ENCODE measurements at regions of chr17 and their contacts with region 1.

Region 1: GRCh38 chr17:57466017-57466471 is 209.7 kb downstream of the MSI2 start:
- DNase-seq: no peak
- ATAC-seq: no peak
- H3K4me3 ChIP-seq: no peak overlapping the region
- H3K27ac ChIP-seq: no peak overlapping the region
- H3K4me1 ChIP-seq: peaks cover 12% of the 10 kb centered on the region
- H3K27me3 ChIP-seq: no peaks in the 10 kb centered on the region; the same call in 1 of the 2 replicates
- CTCF ChIP-seq: no peak
- POLR2A ChIP-seq: no peak
- RAD21 ChIP-seq: no peak

Region 2: GRCh38 chr17:57166717-57167198 is 299.3 kb before region 1 on chr17:
- CTCF ChIA-PET with region 1: no interaction called
- POLR2A ChIA-PET with region 1: no interaction called
- dilution Hi-C with region 1: no loop called
- in situ Hi-C with region 1: no loop called
- intact Hi-C with region 1: no loop called
- DNase-seq: no peak
- ATAC-seq: no peak
- H3K4me3 ChIP-seq: no peak overlapping the region
- H3K27ac ChIP-seq: no peak overlapping the region
- H3K4me1 ChIP-seq: no peaks in the 10 kb centered on the region
- H3K27me3 ChIP-seq: peaks cover 5% of the 10 kb centered on the region; the same call in 1 of the 2 replicates
- CTCF ChIP-seq: no peak
- POLR2A ChIP-seq: no peak
- RAD21 ChIP-seq: no peak

Region 3: GRCh38 chr17:57499648-57500049 is 33.6 kb after region 1 on chr17:
- CTCF ChIA-PET with region 1: no interaction called
- POLR2A ChIA-PET with region 1: no interaction called
- dilution Hi-C with region 1: no loop called
- in situ Hi-C with region 1: no loop called
- intact Hi-C with region 1: loop called (anchors 1 kb)
- DNase-seq: no peak
- ATAC-seq: no peak
- H3K4me3 ChIP-seq: no peak overlapping the region
- H3K27ac ChIP-seq: no peak overlapping the region
- H3K4me1 ChIP-seq: no peaks in the 10 kb centered on the region
- H3K27me3 ChIP-seq: no peaks in the 10 kb centered on the region
- CTCF ChIP-seq: no peak
- POLR2A ChIP-seq: no peak
- RAD21 ChIP-seq: no peak

Region 4: DNA sequence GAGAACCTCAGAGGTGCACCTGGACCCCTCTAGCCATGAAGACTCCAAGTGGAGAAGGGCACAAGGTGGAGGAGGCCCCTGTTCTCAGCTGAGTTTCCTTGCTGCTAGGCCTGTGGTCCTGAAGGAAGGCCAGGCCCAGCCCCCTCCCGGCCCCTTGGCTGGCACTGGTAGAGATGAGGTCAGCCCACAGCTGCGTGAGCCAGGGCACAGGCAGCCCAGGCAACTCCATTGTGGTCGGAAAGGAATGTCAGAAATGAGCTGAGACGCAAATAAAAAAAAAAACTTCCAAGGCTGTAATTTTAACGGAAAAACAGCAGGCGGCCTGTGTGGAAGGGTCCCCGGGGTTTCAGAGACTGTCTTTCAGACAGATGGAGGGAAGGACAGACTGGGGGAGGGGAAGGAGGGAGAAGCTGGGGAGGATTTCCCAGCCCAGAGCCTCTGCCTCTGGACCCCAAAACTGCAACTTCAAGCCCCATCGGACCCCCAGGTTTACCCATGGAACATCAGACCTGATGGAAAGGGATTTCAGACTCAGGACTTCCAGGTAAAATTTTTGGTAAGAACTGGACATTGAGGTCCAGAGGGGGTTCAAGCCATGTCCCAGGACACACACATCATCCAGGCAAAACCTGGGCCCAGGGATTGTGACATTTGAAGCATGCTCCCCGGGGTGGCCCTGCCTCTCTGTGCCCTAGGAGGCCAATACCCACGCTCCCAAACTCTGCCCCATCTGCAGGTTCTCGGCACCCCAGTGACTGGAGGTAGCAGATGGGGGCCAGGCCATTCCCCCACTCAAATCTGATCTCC is 409.5 kb after region 1 on chr17:
- CTCF ChIA-PET with region 1: no interaction called
- POLR2A ChIA-PET with region 1: no interaction called
- dilution Hi-C with region 1: no loop called
- in situ Hi-C with region 1: no loop called
- intact Hi-C with region 1: no loop called
- DNase-seq: peak; percentile 99
- ATAC-seq: peak; percentile 75
- H3K4me3 ChIP-seq: no peak overlapping the region
- H3K27ac ChIP-seq: peak overlapping the region; percentile 89
- H3K4me1 ChIP-seq: peaks cover 51% of the 10 kb centered on the region
- H3K27me3 ChIP-seq: no peaks in the 10 kb centered on the region
- CTCF ChIP-seq: peak; percentile 82
- POLR2A ChIP-seq: peak; percentile 55
- RAD21 ChIP-seq: peak; percentile 77